ENCODE measurements at regions of chr12 and their contacts with region 1.

Region 1: GRCh38 chr12:75455831-75456230 is 24.7 kb upstream of the GLIPR1 start:
- DNase-seq: no peak
- H3K4me3 Mint-ChIP-seq: no peak overlapping the region
- H3K27ac Mint-ChIP-seq: no peak overlapping the region
- H3K4me1 Mint-ChIP-seq: peaks cover 36% of the 10 kb centered on the region
- H3K27me3 Mint-ChIP-seq: no peaks in the 10 kb centered on the region

Region 2: DNA sequence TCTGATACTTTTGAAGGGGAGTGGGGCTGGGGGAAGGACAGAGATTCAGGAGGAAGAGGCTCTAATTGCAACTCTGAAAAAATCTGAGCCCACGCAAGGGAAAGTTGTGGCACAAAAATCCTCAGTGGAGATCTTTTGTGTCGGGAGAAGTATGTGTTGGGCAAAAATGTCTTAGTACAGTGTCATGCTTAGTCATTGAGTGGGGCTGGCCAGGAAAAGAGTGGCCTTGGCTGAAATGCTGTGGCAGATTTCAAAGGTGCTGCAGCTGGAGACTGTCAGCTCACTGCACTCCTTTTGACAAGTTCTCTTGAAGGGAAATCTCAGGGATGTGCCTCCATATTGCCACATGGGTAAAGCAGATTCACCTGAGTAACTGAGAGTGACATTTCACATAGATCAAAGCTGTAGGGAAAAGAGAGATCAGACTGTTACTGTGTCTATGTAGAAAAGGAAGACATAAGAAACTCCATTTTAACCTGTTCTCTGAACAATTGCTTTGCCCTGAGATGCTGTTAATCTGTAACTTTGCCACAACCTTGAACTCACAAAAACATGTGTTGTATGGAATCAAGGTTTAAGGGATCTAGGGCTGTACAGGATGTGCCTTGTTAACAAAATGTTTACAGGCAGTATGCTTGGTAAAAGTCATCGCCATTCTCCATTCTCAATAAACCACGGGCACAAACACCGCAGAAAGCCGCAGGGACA is 11.2 kb before region 1 on chr12:
- CTCF ChIA-PET with region 1: no interaction called
- POLR2A ChIA-PET with region 1: no interaction called
- intact Hi-C with region 1: loop called (anchors 1 kb)
- DNase-seq: no peak
- H3K4me3 Mint-ChIP-seq: no peak overlapping the region
- H3K27ac Mint-ChIP-seq: no peak overlapping the region
- H3K4me1 Mint-ChIP-seq: no peaks in the 10 kb centered on the region
- H3K27me3 Mint-ChIP-seq: peaks cover 5% of the 10 kb centered on the region